HEK293T (cell line): ENCODE measurements at regions of chr19 and their contacts with region 1.

Region 1: DNA sequence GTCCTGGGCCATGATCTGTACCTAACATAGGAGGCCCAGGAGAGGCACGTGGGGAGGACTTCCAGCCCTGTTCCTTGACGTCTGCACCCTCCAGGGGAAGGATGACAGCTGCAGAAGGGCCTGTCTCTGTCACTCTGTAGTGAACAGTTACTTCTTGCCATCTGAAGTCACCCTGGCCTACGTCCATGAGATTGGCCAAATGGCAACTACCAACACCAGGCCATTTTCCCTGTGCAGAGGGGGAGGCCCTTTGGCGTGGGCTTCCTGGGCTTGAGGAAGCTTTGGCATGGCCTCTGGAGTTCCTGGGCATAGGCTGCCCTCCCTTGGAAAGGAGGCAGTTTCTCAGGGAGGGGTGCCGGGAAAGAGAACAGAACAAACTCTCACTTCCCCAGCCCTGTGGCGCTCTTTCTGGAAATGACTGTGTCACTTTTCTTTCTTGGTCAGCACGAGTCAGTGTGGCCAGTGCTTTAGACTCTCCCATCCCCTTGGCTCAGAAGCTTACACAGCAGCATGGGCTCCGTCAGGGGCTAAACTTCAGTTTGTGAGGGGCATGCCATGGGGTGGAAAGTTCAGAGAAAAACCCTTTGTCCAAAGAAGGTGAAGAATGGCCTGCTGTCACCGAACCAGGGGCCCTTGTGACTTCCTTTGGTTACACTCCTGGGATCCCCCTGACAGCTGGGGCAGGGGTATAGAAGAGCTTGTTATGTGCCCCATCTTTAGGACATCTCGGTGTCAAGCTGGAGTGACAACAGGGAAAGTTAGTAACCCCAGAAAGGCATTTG is 5.3 kb downstream of the CARM1 start:
- DNase-seq: no peak

Region 2: GRCh38 chr19:10812902-10813404 is 63.7 kb before region 1 on chr19:
- CTCF ChIA-PET with region 1: no interaction called
- POLR2A ChIA-PET with region 1: no interaction called
- DNase-seq: no peak

Region 3: GRCh38 chr19:10888421-10888866 is 11.8 kb after region 1 on chr19:
- CTCF ChIA-PET with region 1: interaction called, 3 read pairs
- POLR2A ChIA-PET with region 1: interaction called, 10 read pairs
- DNase-seq: no peak

Region 4: DNA sequence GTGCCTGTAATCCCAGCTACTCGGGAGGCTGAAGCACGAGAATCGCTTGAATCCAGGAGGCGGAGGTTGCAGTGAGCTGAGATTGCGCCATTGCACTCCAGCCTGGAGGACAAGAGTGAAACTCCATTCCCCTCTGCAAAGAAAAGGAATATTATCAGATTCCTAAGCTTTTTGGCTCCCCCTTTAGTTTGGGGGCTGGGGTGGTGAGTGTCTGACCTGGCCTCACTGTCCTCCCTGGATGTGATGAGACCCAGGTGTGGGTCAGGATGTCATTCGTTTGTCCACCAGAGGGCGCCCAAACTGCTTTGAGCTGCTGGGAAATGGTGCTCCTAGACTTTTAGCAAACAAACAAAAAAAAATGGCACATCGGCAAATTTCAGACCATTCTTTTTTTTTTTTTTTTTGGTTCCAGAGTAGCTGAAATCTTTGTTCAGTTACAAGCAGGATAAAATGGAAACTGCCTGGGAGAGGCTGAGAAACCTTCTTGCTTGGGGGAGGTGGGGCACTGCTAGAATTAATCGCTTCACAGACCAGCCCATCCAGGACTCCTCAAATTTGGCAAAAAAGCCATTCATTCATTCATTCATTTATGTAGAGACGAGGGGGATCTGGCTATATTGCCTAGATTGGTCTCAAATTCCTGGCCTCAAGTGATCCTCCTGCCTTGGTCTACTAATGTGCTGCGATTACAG is 249.5 kb after region 1 on chr19:
- CTCF ChIA-PET with region 1: no interaction called
- POLR2A ChIA-PET with region 1: no interaction called
- DNase-seq: peak; percentile 72